ENCODE measurements at regions of chrX and their contacts with region 1.

Region 1: GRCh38 chrX:66728818-66729271 is 90.0 kb upstream of the EDA2R start:
- DNase-seq: peak; percentile 69
- H3K4me3 Mint-ChIP-seq: peak overlapping the region; percentile 84
- H3K27ac Mint-ChIP-seq: peak overlapping the region; percentile 89
- H3K4me1 Mint-ChIP-seq: no peaks in the 10 kb centered on the region
- H3K27me3 Mint-ChIP-seq: no peaks in the 10 kb centered on the region
- CTCF ChIP-seq: peak; percentile 47

Region 2: DNA sequence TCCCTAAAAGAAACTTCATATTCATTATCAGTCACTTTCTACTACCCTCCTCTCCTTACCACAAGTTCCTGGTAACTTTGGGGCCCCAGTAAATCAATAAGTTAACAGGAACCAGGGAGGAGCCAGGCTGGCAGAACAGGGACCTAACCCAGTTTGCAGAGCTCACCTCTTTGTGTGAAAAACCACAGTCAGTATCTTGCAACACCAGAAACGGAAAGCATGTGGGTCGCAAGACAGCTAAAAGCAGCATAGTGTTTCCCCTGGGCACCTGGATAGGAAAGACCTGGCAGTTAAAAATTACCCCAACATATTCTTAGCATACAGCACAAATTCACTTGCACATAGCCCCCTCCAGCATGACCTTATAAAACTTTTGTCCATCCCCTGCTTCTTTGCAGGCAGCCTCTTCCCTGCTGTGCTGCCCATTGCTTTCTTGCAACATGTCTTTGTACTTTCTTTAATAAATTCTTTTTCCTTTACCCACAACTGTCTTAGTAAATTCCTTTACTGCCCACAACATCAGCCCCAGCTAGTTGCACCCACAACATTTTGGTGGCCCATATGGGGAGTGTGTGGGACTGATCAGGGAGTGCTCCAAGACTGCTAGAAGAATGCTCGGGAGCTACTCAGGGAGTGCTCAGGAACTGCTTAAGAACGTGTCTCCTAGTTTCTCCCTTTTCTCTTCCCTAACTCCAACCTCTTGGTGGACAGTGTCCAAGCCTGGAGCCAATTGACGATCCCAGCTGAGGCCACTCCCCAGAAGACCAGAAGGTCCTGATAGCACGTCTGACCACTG is 978.0 kb before region 1 on chrX:
- CTCF ChIA-PET with region 1: interaction called, 4 read pairs
- POLR2A ChIA-PET with region 1: no interaction called
- intact Hi-C with region 1: loop called (anchors 10 kb)
- DNase-seq: no peak
- H3K4me3 Mint-ChIP-seq: no peak overlapping the region
- H3K27ac Mint-ChIP-seq: no peak overlapping the region
- H3K4me1 Mint-ChIP-seq: peaks cover 18% of the 10 kb centered on the region
- H3K27me3 Mint-ChIP-seq: no peaks in the 10 kb centered on the region
- CTCF ChIP-seq: no peak

Region 3: GRCh38 chrX:66110112-66110511 is 618.7 kb before region 1 on chrX:
- CTCF ChIA-PET with region 1: interaction called, 4 read pairs
- POLR2A ChIA-PET with region 1: no interaction called
- intact Hi-C with region 1: loop called (anchors 2 kb)
- DNase-seq: peak; percentile 27
- H3K4me3 Mint-ChIP-seq: no peak overlapping the region
- H3K27ac Mint-ChIP-seq: no peak overlapping the region
- H3K4me1 Mint-ChIP-seq: no peaks in the 10 kb centered on the region
- H3K27me3 Mint-ChIP-seq: no peaks in the 10 kb centered on the region
- CTCF ChIP-seq: peak; percentile 40

Region 4: DNA sequence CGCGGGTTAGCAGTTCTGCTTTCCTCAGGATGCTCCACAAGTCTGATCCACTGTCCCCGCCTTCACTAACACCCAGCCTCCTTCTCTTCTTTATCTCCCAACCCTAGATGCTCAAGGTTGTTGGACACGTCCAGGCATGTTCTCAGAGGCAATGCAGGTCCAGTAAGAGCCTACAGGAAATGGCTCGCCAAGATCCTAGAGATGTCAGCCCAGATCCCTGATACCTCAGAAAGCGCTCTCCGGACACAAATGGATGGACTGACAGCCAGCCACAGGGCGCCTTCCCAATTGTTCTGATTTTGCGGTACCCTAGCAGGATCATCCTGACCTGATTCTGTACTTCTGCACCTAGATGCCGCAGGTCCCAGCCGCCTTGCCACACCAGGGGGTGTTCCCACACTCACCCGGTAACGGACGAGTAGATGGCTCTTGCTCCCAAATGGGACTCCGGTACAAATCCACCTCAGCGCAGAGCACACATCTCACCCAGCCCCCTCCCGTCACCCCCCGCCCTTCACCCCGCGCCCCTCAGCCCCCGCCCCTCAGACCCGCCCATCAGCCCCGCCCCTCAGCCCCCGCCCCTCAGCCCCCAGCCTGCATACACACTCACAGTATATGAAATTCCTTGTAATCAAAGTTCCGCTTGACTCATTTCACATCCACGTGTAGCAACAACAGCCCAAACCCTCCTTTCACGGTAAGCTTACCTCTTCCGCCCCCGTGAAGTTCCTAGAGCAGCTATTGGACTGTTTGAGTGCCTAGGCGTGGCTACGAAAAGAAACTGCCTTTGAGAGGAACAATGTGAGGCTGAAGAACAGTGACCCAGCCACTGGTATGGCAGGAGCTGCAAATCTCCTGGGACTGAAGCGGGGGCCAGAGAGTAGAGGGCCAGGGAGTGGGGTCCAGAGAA is 90.0 kb before region 1 on chrX and contains the start of gene EDA2R:
- CTCF ChIA-PET with region 1: interaction called, 18 read pairs
- POLR2A ChIA-PET with region 1: no interaction called
- intact Hi-C with region 1: no loop called
- DNase-seq: peak; percentile 92
- H3K4me3 Mint-ChIP-seq: peak within 1 kb of the TSS; percentile 73
- H3K27ac Mint-ChIP-seq: peak within 1 kb of the TSS; percentile 92
- H3K4me1 Mint-ChIP-seq: peaks cover 12% of the 10 kb centered on the region
- H3K27me3 Mint-ChIP-seq: no peaks in the 10 kb centered on the region
- CTCF ChIP-seq: no peak
- total RNA-seq, gene EDA2R: 30.3 and 32.4 TPM in 2 replicates

Region 5: GRCh38 chrX:66654411-66654810 is 74.4 kb before region 1 on chrX:
- CTCF ChIA-PET with region 1: no interaction called
- POLR2A ChIA-PET with region 1: no interaction called
- intact Hi-C with region 1: no loop called
- DNase-seq: no peak
- H3K4me3 Mint-ChIP-seq: no peak overlapping the region
- H3K27ac Mint-ChIP-seq: no peak overlapping the region
- H3K4me1 Mint-ChIP-seq: no peaks in the 10 kb centered on the region
- H3K27me3 Mint-ChIP-seq: no peaks in the 10 kb centered on the region
- CTCF ChIP-seq: no peak

Region 6: DNA sequence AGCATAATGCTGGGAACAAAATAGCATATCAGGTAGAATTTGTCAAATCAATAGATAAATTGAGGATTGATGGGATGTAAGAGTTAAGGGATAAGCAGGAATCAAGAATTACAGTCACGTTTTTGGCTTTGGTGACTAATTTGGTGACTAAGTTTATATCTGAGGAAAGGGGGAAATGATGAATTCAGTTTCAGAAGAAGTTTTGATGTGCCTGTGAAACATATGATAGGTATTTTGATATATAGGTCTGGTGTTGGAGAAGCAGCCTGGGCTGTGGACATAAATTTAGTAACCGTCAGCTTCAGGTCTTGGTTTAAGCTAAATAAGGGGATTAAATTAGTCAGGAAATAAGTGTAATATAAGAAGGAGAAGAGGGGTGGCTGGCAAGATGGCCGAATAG is 10.9 kb before region 1 on chrX:
- CTCF ChIA-PET with region 1: interaction called, 26 read pairs
- POLR2A ChIA-PET with region 1: no interaction called
- intact Hi-C with region 1: no loop called
- DNase-seq: no peak
- H3K4me3 Mint-ChIP-seq: no peak overlapping the region
- H3K27ac Mint-ChIP-seq: no peak overlapping the region
- H3K4me1 Mint-ChIP-seq: no peaks in the 10 kb centered on the region
- H3K27me3 Mint-ChIP-seq: no peaks in the 10 kb centered on the region
- CTCF ChIP-seq: no peak

Region 7: DNA sequence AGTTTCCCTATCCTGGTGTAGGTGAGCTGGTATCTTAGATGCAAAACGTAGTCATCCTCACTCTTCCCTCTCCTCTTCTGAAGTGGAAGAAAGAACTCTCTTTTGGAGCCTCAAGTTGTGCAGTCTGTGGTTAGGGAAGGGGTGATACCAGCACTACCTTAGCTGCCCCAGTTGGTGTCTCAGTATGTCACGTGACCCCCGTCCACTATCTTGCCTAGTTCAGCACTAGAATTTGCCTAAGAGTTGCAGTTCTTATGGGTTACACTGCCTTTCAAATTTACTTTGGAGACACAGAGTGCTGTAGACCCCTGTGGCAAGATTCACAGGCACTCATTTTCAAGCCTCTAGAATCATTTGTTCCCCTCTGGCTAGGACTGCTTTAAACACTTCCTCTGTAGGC is 232.8 kb after region 1 on chrX:
- CTCF ChIA-PET with region 1: no interaction called
- POLR2A ChIA-PET with region 1: no interaction called
- intact Hi-C with region 1: no loop called
- DNase-seq: no peak
- H3K4me3 Mint-ChIP-seq: no peak overlapping the region
- H3K27ac Mint-ChIP-seq: no peak overlapping the region
- H3K4me1 Mint-ChIP-seq: no peaks in the 10 kb centered on the region
- H3K27me3 Mint-ChIP-seq: no peaks in the 10 kb centered on the region
- CTCF ChIP-seq: no peak